ENCODE measurements at regions of chr16 and their contacts with region 1.

Region 1: DNA sequence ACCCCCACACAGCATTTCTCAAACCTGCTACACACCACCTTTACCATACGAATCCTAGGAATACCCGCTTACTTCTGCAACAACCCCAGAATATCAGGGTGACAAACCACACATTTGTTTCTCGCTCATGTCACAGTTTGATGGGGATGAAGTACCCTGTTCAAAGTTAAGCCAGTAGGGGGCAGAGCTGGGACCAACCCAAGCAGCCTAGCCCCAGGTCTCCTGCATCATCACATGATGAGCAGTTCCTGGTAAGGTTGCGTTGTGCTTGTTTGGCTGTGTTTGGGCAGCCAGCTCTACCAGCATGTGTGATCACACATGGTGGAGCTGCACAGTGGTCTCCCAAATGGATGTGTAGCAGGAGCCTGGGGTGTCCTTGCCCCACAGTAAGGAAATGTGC is 103.6 kb upstream of the C16orf82 start:
- DNase-seq: peak in 1 of 2 experiments; percentile 70
- H3K4me3 ChIP-seq: no peak overlapping the region
- H3K27ac ChIP-seq: no peak overlapping the region
- H3K4me1 ChIP-seq: no peaks in the 10 kb centered on the region; a peak in 1 of 7 replicates
- H3K27me3 ChIP-seq: no peaks in the 10 kb centered on the region
- CTCF ChIP-seq: peak; percentile 71 to 90 (median 73)
- EP300 ChIP-seq: no peak
- POLR2A ChIP-seq: no peak
- RAD21 ChIP-seq: peak; percentile 64 to 76

Region 2: GRCh38 chr16:26952411-26952810 is 10.7 kb before region 1 on chr16:
- CTCF ChIA-PET with region 1: interaction called, 15 read pairs
- POLR2A ChIA-PET with region 1: no interaction called
- DNase-seq: no peak
- H3K4me3 ChIP-seq: no peak overlapping the region
- H3K27ac ChIP-seq: no peak overlapping the region
- H3K4me1 ChIP-seq: no peaks in the 10 kb centered on the region
- H3K27me3 ChIP-seq: no peaks in the 10 kb centered on the region; a peak in 1 of 7 replicates
- CTCF ChIP-seq: peak; percentile 44 to 71 (median 51)
- EP300 ChIP-seq: no peak
- POLR2A ChIP-seq: no peak
- RAD21 ChIP-seq: peak; percentile 50 to 61

Region 3: GRCh38 chr16:27367461-27368357 is 404.6 kb after region 1 on chr16:
- CTCF ChIA-PET with region 1: no interaction called
- POLR2A ChIA-PET with region 1: no interaction called
- DNase-seq: peak; percentile 41 to 88
- H3K4me3 ChIP-seq: no peak overlapping the region
- H3K27ac ChIP-seq: no peak overlapping the region
- H3K4me1 ChIP-seq: no peaks in the 10 kb centered on the region; a peak in 3 of 7 replicates
- H3K27me3 ChIP-seq: no peaks in the 10 kb centered on the region
- CTCF ChIP-seq: peak; percentile 89 to 93 (median 89)
- EP300 ChIP-seq: no peak
- POLR2A ChIP-seq: no peak
- RAD21 ChIP-seq: peak; percentile 91 to 93